ENCODE measurements at regions of chr14 and their contacts with region 1.

Region 1: DNA sequence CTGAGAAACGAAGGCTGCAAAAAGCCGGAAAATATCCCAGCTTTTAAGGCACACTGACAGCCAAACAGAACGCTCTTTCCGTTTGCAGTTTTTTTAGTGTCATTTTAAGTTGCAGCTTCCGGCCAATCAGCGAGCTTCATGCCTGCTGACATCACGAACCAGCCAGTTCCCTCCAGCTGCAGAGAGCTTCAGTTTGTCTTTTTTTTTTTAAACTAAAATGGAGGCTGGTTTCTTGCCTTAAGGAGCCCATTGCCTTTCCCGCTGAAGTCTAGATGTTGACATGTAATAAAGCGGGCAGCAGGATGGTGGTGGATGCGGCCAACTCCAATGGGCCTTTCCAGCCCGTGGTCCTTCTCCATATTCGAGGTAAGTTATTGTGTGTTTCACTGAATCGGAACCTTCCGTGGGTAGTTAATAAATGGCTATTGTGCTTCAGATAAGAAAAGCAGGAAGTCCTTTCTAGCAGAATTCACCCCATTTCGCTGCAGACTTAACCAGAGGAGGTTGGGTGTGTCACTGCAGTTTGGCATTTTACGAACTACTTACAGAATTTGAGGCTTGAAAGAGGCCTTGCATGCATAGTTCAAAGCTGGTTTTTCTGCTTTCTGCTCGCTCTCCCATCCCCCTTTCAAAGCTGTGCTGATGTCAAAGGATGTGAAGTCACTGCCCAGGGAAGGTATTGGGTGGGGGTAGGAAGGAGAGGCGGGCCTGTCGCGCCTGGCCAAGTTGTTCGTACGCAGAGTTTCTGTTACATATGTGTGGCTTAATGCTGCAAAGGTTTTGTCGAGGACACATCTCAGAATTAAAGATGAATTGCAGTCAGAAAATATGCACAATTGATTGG is 48.4 kb downstream of the PPP2R5C start:
- DNase-seq: peak; percentile 88
- ATAC-seq: peak; percentile 92
- H3K4me3 ChIP-seq: peak overlapping the region; percentile 93
- H3K27ac ChIP-seq: peak overlapping the region; percentile 100
- H3K4me1 ChIP-seq: peaks cover 20% of the 10 kb centered on the region
- H3K27me3 ChIP-seq: no peaks in the 10 kb centered on the region
- CTCF ChIP-seq: no peak
- EP300 ChIP-seq: peak; percentile 61 to 82; a peak in 3 of 4 replicates
- POLR2A ChIP-seq: peak; percentile 86
- RAD21 ChIP-seq: no peak

Region 2: GRCh38 chr14:101761032-101761880 is 48.6 kb before region 1 on chr14 and contains the start of gene PPP2R5C:
- CTCF ChIA-PET with region 1: no interaction called
- POLR2A ChIA-PET with region 1: interaction called, 15 read pairs
- RAD21 ChIA-PET with region 1: interaction called, 12 read pairs
- SMC1A ChIA-PET with region 1: interaction called, 4 read pairs
- in situ Hi-C with region 1: no loop called
- intact Hi-C with region 1: no loop called
- DNase-seq: no peak
- ATAC-seq: peak; percentile 93
- H3K4me3 ChIP-seq: peak within 1 kb of the TSS; percentile 84
- H3K27ac ChIP-seq: 0 out of 2 replicates have a peak within 1 kb of the TSS, but pooled peaks have one; percentile 37
- H3K4me1 ChIP-seq: no peaks in the 10 kb centered on the region
- H3K27me3 ChIP-seq: no peaks in the 10 kb centered on the region; a peak in 2 of 4 replicates
- CTCF ChIP-seq: no peak
- EP300 ChIP-seq: no peak
- POLR2A ChIP-seq: peak; percentile 67; the same call in 1 of the 2 replicates
- RAD21 ChIP-seq: no peak
- polyA plus RNA-seq, gene PPP2R5C: 190 to 199 TPM

Region 3: DNA sequence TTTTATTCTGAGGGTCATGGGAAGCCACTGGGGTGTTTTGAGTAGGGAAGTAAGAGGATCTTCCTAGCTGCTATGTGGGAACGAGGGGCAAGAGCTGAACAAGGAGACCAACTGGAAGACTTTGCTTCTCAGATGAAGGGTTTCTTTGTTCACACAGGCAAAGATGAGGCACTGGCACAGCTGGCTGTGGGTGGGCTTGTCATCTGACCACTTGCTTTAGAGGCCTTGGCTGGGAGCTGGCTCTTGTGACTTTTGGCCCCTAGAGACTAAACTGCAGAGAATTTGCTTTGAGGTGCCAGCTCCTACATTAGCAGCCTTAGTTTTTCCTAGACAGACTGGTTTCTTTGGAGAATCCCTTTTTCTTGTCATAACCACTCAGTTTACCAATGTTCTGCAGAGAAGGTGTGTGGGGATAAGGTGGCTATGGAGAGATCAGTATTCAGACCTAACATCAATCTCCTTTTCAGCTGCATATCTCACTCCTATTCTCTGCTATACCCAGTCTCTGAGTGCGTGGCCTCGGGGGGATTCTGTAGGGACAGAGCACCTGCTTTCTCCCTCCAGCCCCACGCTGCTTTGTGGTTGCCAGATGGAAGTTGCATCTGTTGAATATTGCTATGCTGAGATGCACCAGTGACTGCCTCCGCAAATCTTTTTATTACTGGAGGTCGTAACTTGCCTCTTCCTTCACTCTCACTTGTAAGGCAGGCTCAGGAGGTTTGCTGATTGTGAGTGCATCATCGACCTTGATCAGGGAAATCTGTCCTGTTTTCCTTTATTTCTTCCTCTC is 35.7 kb before region 1 on chr14:
- CTCF ChIA-PET with region 1: interaction called, 30 read pairs
- POLR2A ChIA-PET with region 1: interaction called, 4 read pairs
- RAD21 ChIA-PET with region 1: interaction called, 16 read pairs
- SMC1A ChIA-PET with region 1: interaction called, 17 read pairs
- in situ Hi-C with region 1: no loop called
- intact Hi-C with region 1: no loop called
- DNase-seq: no peak
- ATAC-seq: no peak; the same call in 2 of the 3 replicates
- H3K4me3 ChIP-seq: no peak overlapping the region
- H3K27ac ChIP-seq: no peak overlapping the region
- H3K4me1 ChIP-seq: peaks cover 19% of the 10 kb centered on the region
- H3K27me3 ChIP-seq: no peaks in the 10 kb centered on the region
- CTCF ChIP-seq: no peak
- EP300 ChIP-seq: no peak
- POLR2A ChIP-seq: no peak
- RAD21 ChIP-seq: no peak

Region 4: DNA sequence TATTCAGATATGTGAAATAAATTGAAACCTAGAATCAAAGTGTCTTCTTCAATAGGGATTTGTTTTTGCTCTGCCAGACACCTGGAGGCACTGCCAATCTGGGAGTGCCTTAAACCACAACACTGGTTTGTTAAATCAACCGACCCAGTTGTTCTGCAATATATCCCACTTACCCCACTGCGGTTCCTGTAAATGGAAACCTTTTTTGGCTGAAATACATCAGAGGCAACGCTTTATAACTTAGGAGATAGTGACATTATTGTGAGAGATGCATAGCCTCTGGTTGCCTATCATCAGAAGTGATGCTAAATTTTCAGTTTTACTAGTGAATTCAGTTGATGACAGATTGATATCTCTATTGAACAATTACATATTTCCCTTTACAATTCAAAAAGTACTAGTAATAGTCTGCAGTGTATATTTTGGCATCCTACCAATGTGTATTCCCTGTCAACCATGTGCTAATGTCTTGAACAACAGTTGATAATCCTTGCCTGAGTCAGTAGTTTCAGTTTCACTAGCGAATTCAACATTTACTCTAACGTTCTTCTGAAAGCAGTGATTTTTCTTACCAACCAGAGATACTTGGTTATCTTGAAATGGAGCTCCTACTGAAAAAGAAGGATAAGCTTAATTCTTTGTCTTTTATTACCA is 17.8 kb before region 1 on chr14:
- CTCF ChIA-PET with region 1: no interaction called
- POLR2A ChIA-PET with region 1: interaction called, 13 read pairs
- RAD21 ChIA-PET with region 1: interaction called, 5 read pairs
- SMC1A ChIA-PET with region 1: interaction called, 7 read pairs
- in situ Hi-C with region 1: no loop called
- intact Hi-C with region 1: no loop called
- DNase-seq: no peak
- ATAC-seq: peak; percentile 76
- H3K4me3 ChIP-seq: 0 out of 2 replicates have a peak overlapping the region, but pooled peaks have one; percentile 35
- H3K27ac ChIP-seq: peak overlapping the region; percentile 43; the same call in 1 of the 2 replicates
- H3K4me1 ChIP-seq: peaks cover 4% of the 10 kb centered on the region
- H3K27me3 ChIP-seq: no peaks in the 10 kb centered on the region
- CTCF ChIP-seq: no peak
- EP300 ChIP-seq: no peak
- POLR2A ChIP-seq: no peak
- RAD21 ChIP-seq: no peak

Region 5: DNA sequence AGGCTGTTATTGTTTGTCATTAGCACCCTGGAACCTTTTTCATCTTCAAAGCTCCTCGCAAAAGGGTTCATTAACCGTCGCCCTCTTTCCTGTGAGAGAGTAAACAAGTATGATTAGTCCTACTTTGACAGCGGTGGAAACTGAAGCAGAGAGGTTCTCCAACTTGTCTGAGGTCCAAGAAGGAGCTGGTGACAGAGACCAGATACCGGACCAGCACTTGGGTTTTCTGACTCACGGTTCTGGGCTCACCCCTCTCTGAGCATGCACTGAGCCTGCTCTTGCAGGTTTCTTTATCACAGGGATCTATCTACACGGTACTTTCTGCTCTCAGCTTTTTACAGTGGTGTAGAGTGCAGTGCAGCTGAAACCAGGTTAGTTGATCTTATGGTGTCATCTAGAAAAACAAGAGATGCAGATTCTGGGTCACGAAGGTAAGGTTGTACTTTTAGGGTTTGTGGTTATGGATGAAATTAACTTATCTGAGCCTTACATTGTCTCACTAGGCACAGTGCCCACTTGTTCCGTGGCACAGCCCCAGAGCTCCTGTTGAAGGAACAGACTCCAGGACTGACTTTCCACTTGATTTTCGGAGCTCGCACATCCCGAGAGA is 13.7 kb after region 1 on chr14:
- CTCF ChIA-PET with region 1: interaction called, 35 read pairs
- POLR2A ChIA-PET with region 1: interaction called, 176 read pairs
- RAD21 ChIA-PET with region 1: interaction called, 111 read pairs
- SMC1A ChIA-PET with region 1: interaction called, 98 read pairs
- in situ Hi-C with region 1: no loop called
- intact Hi-C with region 1: loop called (anchors 1 kb)
- DNase-seq: peak; percentile 68
- ATAC-seq: peak; percentile 77
- H3K4me3 ChIP-seq: peak overlapping the region; percentile 67
- H3K27ac ChIP-seq: peak overlapping the region; percentile 99
- H3K4me1 ChIP-seq: peaks cover 63% of the 10 kb centered on the region
- H3K27me3 ChIP-seq: no peaks in the 10 kb centered on the region
- CTCF ChIP-seq: no peak
- EP300 ChIP-seq: 0 out of 4 replicates have a peak, but pooled peaks of 1 of the 2 experiments have one; percentile 32
- POLR2A ChIP-seq: no peak; the same call in 1 of the 2 replicates
- RAD21 ChIP-seq: no peak

Region 6: DNA sequence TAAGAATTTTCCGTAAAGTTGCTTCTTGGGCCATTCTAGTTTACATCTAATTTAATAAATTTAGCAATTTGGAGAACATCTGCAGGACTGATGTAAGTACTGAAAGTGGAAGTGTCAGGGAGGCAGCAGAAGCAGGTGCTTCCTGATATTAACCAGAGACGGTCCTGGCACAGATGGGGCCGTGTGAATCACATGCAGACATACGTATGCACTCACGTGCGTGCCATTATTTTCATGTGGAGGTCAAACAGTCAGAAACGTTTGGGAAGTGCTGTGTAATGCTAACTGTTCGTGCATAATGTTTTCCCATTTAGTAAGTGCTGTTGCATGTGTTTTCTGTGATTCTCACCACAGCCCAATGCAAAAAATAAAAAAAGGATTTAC is 66.7 kb after region 1 on chr14:
- CTCF ChIA-PET with region 1: interaction called, 4 read pairs
- POLR2A ChIA-PET with region 1: interaction called, 7 read pairs
- RAD21 ChIA-PET with region 1: interaction called, 14 read pairs
- SMC1A ChIA-PET with region 1: interaction called, 12 read pairs
- in situ Hi-C with region 1: no loop called
- intact Hi-C with region 1: no loop called
- DNase-seq: peak; percentile 75
- ATAC-seq: peak; percentile 93
- H3K4me3 ChIP-seq: peak overlapping the region; percentile 33
- H3K27ac ChIP-seq: peak overlapping the region; percentile 92
- H3K4me1 ChIP-seq: peaks cover 49% of the 10 kb centered on the region
- H3K27me3 ChIP-seq: no peaks in the 10 kb centered on the region
- CTCF ChIP-seq: no peak
- EP300 ChIP-seq: peak; percentile 92 to 99
- POLR2A ChIP-seq: no peak
- RAD21 ChIP-seq: no peak

Region 7: DNA sequence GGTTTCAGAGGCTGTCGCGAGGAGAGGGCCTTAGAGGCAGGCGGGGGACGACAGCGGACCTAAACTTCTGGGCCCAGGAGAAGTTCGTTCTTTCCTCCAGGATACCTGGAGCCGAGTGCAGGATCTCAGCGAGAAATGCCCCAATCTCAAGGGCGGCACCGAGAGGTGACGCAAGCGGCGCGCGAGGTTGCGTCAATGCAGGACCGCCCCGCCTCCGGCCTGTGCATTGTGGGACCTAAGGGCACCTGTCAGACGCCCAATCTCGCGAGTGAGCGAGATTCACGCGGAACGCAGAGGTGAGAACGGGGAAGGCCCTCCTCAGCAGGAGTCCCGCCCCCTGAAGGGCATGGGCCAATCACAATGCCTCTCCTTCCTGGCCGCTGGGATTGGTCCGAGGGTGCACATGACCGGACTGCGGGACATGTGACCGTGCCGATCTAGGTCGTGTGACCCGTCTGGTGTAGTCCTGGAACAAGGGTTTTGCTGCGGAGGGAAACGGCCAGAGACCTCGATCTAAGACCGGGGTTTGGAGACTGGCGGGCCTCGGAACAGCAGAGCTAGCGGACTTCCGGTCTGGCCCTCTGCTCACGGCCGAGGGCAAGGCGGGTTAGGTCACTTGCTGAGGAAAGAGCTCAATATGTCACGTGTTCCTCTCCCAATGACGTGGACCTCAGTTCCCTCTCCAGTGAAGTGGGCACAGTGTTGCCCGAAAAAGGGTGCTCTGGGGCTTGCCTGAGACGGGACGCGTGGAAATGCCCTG is 138.2 kb after region 1 on chr14:
- CTCF ChIA-PET with region 1: interaction called, 8 read pairs
- POLR2A ChIA-PET with region 1: interaction called, 11 read pairs
- RAD21 ChIA-PET with region 1: interaction called, 5 read pairs
- SMC1A ChIA-PET with region 1: interaction called, 4 read pairs
- in situ Hi-C with region 1: no loop called
- intact Hi-C with region 1: no loop called
- DNase-seq: peak; percentile 100
- ATAC-seq: peak; percentile 99
- H3K4me3 ChIP-seq: peak overlapping the region; percentile 99
- H3K27ac ChIP-seq: peak overlapping the region; percentile 83
- H3K4me1 ChIP-seq: peaks cover 2% of the 10 kb centered on the region; the same call in 1 of the 2 replicates
- H3K27me3 ChIP-seq: no peaks in the 10 kb centered on the region
- CTCF ChIP-seq: no peak; a peak in 1 of 6 replicates
- EP300 ChIP-seq: 0 out of 4 replicates have a peak, but pooled peaks of 1 of the 2 experiments have one; percentile 32
- POLR2A ChIP-seq: peak; percentile 91
- RAD21 ChIP-seq: no peak